Posterior vena cava (tissue), 2 donors: ENCODE measurements at regions of chr7 and their contacts with region 1.

Region 1: GRCh38 chr7:66586181-66586580 is 42.5 kb upstream of the KCTD7 start:
- DNase-seq: no peak

Region 2: DNA sequence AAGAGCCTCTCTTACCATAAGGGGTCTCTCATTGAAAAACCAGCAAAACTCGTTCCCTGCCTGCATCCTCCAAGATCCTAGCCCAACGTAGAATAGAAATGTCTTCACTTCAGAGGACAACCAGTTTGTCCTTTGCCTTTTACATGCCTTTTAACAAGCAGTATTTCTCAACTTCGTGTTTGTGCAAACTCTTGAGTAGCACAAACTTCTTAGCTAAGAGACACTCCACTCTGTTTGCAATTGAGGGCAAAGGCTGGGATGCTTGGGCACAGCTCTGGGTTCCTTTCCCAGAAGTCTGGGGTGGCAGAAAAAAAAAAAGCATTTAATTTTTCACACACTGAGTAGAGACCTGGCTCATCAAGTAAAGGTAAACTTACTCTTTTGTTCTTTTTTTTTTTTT is 23.0 kb after region 1 on chr7:
- intact Hi-C with region 1: no loop called
- DNase-seq: no peak

Region 3: DNA sequence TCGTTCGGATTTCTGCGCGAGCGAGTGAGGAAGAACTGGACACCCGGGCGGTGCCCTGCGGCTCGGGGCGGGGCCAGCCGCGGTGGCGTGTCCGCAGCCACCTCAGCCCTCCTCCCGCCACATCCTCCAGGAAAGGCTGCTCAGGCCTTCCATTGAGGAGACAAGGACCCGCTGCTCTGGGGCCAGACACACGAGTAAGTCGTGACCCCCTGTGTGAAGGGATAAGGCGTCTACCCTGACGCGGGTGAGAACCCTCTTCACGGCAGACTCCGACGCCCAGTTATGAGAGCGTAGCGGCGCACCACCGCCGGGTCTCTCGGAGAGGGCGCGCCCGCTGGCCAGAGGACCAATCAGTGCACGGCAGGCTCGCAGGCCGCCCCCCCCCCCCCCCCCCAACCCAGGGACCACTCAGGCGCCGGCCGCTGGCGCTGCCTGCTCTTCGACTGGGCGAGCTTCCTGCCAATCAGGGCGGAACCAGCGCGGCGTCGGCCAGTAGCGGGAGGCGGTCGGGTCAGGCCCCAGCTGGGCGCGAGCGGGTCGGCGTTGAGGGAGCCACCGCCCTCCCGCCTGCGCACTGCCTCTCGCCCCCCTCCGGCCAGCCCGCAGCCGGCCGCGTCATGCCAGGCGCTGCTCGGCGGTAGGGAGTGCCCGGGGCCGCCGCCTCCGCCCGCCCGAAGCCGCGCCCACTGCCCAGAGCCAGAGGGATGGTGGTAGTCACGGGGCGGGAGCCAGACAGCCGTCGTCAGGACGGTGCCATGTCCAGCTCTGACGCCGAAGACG is 42.4 kb after region 1 on chr7 and contains the start of gene KCTD7:
- intact Hi-C with region 1: loop called in 1 of 2 experiments (anchors 5 kb)
- DNase-seq: peak; percentile 100
- total RNA-seq, gene KCTD7: 8.8 to 10.1 TPM